ENCODE measurements at regions of chr5 and their contacts with region 1.

Region 1: GRCh38 chr5:111550279-111551020 is 38.1 kb upstream of the STARD4 start:
- DNase-seq: peak; percentile 27
- ATAC-seq: peak; percentile 76
- H3K4me3 Mint-ChIP-seq: no peak overlapping the region
- H3K27ac Mint-ChIP-seq: no peak overlapping the region
- H3K4me1 Mint-ChIP-seq: peaks cover 4% of the 10 kb centered on the region
- H3K27me3 Mint-ChIP-seq: peaks cover 5% of the 10 kb centered on the region
- CTCF ChIP-seq: peak; percentile 25

Region 2: DNA sequence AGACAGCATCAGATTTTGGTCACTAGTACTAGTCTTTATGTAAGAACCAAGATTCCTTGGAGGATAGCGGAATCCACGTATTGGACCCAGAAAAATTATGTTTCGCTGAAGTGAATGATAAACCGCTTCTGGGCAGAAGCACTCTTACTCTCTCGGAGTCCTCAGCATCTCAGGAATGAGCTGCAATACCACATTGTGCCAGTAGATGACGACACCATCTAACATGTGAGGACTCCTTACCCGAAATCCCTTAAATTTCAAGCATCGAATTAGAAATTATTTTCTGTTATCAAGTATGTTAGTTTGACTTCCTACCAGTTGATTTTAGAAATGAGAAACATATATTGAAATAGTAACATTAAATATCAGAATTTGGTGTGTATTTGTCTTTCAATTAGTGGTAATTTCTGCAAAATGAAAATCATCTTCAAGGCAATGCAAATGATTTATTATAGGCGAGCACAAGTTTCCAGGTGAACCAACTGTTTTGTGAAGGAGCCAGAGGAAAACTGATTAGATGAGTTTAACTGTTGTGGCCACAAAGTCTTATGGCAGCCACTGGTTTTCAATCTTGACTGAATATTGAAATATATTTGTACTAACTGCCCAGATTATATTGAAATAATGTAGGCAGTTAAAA is 392.2 kb before region 1 on chr5:
- CTCF ChIA-PET with region 1: no interaction called
- POLR2A ChIA-PET with region 1: no interaction called
- intact Hi-C with region 1: loop called (anchors 1 kb)
- DNase-seq: no peak
- ATAC-seq: peak; percentile 49
- H3K4me3 Mint-ChIP-seq: no peak overlapping the region
- H3K27ac Mint-ChIP-seq: no peak overlapping the region
- H3K4me1 Mint-ChIP-seq: no peaks in the 10 kb centered on the region
- H3K27me3 Mint-ChIP-seq: peaks cover 10% of the 10 kb centered on the region
- CTCF ChIP-seq: peak; percentile 99

Region 3: DNA sequence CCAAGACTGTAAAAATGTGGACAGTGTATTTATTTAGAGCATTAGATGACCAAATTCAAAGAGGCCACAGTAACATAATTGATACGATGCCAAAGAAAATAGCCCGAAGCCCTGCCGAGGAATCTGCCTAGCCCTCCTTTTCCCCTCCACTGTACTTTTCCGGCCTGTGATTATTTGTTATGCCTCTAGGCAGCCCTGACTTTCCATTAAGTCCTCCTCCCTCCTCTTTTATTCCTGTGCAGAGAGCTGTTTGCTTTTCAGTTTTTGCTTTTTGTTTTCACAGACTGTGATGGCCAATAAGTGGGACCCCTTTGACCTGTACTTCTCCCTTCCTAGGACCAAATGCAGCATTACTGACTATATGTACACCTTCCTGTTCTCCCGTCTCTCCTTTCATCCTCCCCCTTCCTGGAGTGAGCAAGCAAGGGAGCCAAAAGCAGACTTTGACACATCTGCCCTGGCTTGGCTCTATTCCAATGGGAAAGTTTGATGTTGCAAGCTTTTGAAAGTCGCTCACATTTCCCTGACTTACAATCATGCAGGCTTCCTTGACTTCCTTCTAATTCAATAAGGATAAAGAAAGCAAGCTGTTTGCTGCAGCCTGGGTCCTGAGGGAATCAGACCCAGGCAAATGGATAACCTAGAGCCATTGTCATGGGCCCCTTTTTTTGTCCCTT is 130.4 kb after region 1 on chr5:
- CTCF ChIA-PET with region 1: no interaction called
- POLR2A ChIA-PET with region 1: no interaction called
- intact Hi-C with region 1: loop called (anchors 10 kb)
- DNase-seq: no peak
- ATAC-seq: no peak
- H3K4me3 Mint-ChIP-seq: no peak overlapping the region
- H3K27ac Mint-ChIP-seq: no peak overlapping the region
- H3K4me1 Mint-ChIP-seq: no peaks in the 10 kb centered on the region
- H3K27me3 Mint-ChIP-seq: peaks cover 4% of the 10 kb centered on the region
- CTCF ChIP-seq: no peak

Region 4: GRCh38 chr5:111834926-111835598 is 284.6 kb after region 1 on chr5:
- CTCF ChIA-PET with region 1: no interaction called
- POLR2A ChIA-PET with region 1: no interaction called
- intact Hi-C with region 1: loop called (anchors 1 kb)
- DNase-seq: no peak
- ATAC-seq: no peak
- H3K4me3 Mint-ChIP-seq: no peak overlapping the region
- H3K27ac Mint-ChIP-seq: no peak overlapping the region
- H3K4me1 Mint-ChIP-seq: no peaks in the 10 kb centered on the region
- H3K27me3 Mint-ChIP-seq: no peaks in the 10 kb centered on the region
- CTCF ChIP-seq: no peak